ENCODE measurements at regions of chr12 and their contacts with region 1.

Region 1: GRCh38 chr12:122752464-122753318 is at the start of gene DENR:
- DNase-seq: peak; percentile 94 to 99 (median 96)

Region 2: DNA sequence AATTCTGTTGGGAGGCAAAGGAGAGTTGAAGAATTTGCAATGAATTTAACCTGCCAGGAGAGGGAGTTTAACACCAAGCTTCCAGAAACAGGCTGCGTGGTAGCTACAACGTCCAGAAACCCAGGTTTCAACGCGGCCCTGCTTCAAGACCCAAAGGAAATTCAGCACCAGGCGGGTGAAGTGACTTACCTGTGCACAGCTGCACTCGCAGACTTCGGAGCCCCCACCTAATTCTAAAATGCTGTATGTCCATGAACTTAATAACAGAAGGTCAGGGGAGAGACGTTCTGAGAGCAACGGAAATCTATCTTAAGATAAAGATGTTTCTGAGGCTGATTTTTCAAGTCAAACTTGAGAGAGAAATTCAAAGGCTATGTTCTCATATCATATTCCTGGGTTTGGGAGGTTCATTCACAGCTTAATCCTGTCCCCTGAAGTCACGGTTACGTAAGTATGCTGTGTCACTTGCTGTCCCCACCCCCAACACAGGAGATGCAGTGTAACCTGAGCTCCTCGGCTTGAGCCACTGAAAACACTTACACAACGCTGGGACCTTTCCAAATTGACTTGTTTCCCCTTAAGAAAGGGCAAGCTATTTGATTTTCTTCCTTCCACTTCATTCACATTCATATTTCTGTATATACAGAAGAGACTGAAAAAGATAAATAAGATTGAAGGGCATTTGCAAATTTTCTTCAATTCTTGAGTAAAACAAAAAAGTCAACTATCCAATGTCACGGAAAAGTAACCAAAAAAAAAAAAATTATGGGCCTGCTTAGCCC is 352.9 kb before region 1 on chr12:
- intact Hi-C with region 1: loop called (anchors 10 kb)
- DNase-seq: peak in 8 of 10 donors; percentile 29 to 89 (median 50)

Region 3: GRCh38 chr12:122526683-122527477 is 225.8 kb before region 1 on chr12 and contains the starts of genes KNTC1 and RSRC2:
- intact Hi-C with region 1: loop called (anchors 1 kb)
- DNase-seq: peak; percentile 95 to 100 (median 98)

Region 4: DNA sequence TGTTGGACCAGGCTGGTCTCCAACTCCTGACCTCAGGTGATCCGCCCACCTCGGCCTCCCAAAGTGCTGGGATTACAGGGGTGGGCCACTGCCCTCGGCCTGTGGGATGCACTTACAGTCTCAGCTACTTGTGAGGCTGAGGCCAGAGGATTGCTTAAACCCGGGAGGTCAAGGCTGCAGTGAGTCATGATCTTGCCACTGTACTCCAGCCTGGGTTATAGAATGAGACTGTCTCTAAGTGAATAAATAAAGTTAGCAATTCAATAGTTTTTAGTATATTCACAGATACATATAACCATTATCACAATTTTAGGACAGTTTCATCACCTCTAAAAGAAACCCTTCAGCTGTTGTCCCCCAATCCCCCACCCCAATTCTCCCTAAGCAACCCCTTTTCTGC is 110.7 kb before region 1 on chr12:
- intact Hi-C with region 1: loop called (anchors 1 kb)
- DNase-seq: no peak

Measured in posterior cingulate gyrus (tissue), 11 donors.